Panc1 (cell line): ENCODE measurements at regions of chr5 and their contacts with region 1.

Region 1: GRCh38 chr5:131109540-131110255 is 55.4 kb downstream of the HINT1 start:
- DNase-seq: peak; percentile 17
- ATAC-seq: peak; percentile 85
- H3K4me3 ChIP-seq: no peak overlapping the region
- H3K27ac ChIP-seq: no peak overlapping the region
- H3K4me1 ChIP-seq: no peaks in the 10 kb centered on the region
- H3K27me3 ChIP-seq: peaks cover 9% of the 10 kb centered on the region; the same call in 1 of the 2 replicates
- CTCF ChIP-seq: peak; percentile 75; the same call in 1 of the 2 replicates

Region 2: GRCh38 chr5:129904102-129904666 is 1205.5 kb before region 1 on chr5 and contains the start of gene CHSY3:
- CTCF ChIA-PET with region 1: interaction called, 5 read pairs
- POLR2A ChIA-PET with region 1: no interaction called
- in situ Hi-C with region 1: no loop called
- intact Hi-C with region 1: loop called (anchors 5 kb)
- DNase-seq: no peak
- ATAC-seq: peak; percentile 95
- H3K4me3 ChIP-seq: peak within 1 kb of the TSS; percentile 43 to 55
- H3K27ac ChIP-seq: no peak within 1 kb of the TSS
- H3K4me1 ChIP-seq: peaks cover 6% of the 10 kb centered on the region
- H3K27me3 ChIP-seq: peaks cover 43% of the 10 kb centered on the region
- CTCF ChIP-seq: no peak
- total RNA-seq, gene CHSY3: not detected

Region 3: DNA sequence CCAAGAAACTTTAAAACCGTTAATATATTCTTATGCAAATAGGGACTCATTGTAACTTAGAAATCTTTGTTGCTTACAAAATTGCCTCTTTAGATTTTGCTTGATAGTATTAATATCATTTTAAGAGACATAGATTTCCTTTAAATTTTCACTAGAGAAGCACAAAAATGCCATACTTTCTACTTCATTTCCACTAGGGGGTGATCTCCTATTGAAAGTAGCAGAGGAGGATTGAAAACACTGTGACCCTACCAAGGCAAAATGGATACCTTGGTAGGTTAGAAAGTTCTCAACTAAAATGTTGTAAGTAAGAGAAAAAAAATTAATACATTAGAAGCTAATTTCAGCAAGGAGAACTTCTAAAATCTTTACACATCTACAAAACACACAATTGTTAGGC is 1000.5 kb before region 1 on chr5:
- CTCF ChIA-PET with region 1: no interaction called
- POLR2A ChIA-PET with region 1: no interaction called
- in situ Hi-C with region 1: no loop called
- intact Hi-C with region 1: loop called (anchors 5 kb)
- DNase-seq: no peak
- ATAC-seq: no peak
- H3K4me3 ChIP-seq: no peak overlapping the region
- H3K27ac ChIP-seq: no peak overlapping the region
- H3K4me1 ChIP-seq: no peaks in the 10 kb centered on the region
- H3K27me3 ChIP-seq: no peaks in the 10 kb centered on the region
- CTCF ChIP-seq: peak; percentile 62; the same call in 1 of the 2 replicates

Region 4: DNA sequence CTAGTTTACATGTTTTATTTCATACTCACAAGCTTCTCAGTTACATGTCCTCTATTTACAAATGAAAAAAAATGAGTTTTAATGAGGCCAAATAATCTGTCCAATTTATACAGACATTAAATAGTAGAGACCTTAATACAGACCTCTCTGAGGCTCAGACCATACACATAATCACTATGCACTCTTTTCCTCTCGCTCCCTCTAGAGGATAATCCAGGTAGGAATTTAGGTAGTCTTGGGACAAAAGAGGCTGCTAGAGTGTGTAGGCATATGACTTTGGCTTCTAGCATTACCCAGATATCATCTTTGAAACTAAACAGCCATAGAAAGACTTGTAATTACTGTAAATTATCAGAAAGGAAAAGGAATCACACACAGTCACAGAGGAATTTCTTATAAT is 389.3 kb before region 1 on chr5:
- CTCF ChIA-PET with region 1: no interaction called
- POLR2A ChIA-PET with region 1: no interaction called
- in situ Hi-C with region 1: no loop called
- intact Hi-C with region 1: loop called (anchors 10 kb)
- DNase-seq: no peak
- ATAC-seq: peak; percentile 86
- H3K4me3 ChIP-seq: no peak overlapping the region
- H3K27ac ChIP-seq: no peak overlapping the region
- H3K4me1 ChIP-seq: no peaks in the 10 kb centered on the region
- H3K27me3 ChIP-seq: no peaks in the 10 kb centered on the region
- CTCF ChIP-seq: peak; percentile 57; the same call in 1 of the 2 replicates

Region 5: GRCh38 chr5:130871346-130872086 is 238.2 kb before region 1 on chr5:
- CTCF ChIA-PET with region 1: no interaction called
- POLR2A ChIA-PET with region 1: no interaction called
- in situ Hi-C with region 1: no loop called
- intact Hi-C with region 1: loop called (anchors 1 kb)
- DNase-seq: peak; percentile 10
- ATAC-seq: no peak
- H3K4me3 ChIP-seq: no peak overlapping the region
- H3K27ac ChIP-seq: no peak overlapping the region
- H3K4me1 ChIP-seq: no peaks in the 10 kb centered on the region
- H3K27me3 ChIP-seq: no peaks in the 10 kb centered on the region
- CTCF ChIP-seq: peak; percentile 63

Region 6: GRCh38 chr5:130939059-130939458 is 170.6 kb before region 1 on chr5:
- CTCF ChIA-PET with region 1: no interaction called
- POLR2A ChIA-PET with region 1: no interaction called
- in situ Hi-C with region 1: no loop called
- intact Hi-C with region 1: no loop called
- DNase-seq: no peak
- ATAC-seq: no peak
- H3K4me3 ChIP-seq: no peak overlapping the region
- H3K27ac ChIP-seq: no peak overlapping the region
- H3K4me1 ChIP-seq: no peaks in the 10 kb centered on the region
- H3K27me3 ChIP-seq: no peaks in the 10 kb centered on the region
- CTCF ChIP-seq: no peak

Region 7: GRCh38 chr5:131068893-131069643 is 40.6 kb before region 1 on chr5:
- CTCF ChIA-PET with region 1: no interaction called
- POLR2A ChIA-PET with region 1: no interaction called
- in situ Hi-C with region 1: no loop called
- intact Hi-C with region 1: no loop called
- DNase-seq: no peak
- ATAC-seq: no peak
- H3K4me3 ChIP-seq: no peak overlapping the region
- H3K27ac ChIP-seq: no peak overlapping the region
- H3K4me1 ChIP-seq: no peaks in the 10 kb centered on the region
- H3K27me3 ChIP-seq: no peaks in the 10 kb centered on the region
- CTCF ChIP-seq: no peak